ENCODE measurements at regions of chr1 and their contacts with region 1.

Region 1: DNA sequence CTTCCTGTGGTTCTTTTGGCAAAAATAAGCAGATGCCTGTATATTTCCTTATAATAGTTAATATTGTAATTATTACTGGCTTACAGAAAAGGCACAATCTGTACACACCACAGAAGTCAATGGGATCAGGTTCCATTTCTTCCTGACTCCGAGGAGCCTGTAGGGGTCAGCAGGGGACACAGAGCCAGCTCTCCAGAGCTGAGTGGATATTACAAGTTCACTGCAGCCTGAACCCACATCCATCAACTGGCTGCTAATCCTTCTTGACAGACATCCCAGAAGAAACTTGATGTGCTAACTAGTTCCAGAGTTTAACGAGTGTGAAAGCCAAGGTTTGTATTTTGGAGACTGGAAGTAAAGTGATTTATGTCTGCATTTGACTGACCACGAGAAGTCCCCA is 203.8 kb downstream of the LMX1A start:
- DNase-seq: peak; percentile 70
- ATAC-seq: peak; percentile 85
- H3K4me3 ChIP-seq: peak overlapping the region; percentile 28
- H3K27ac ChIP-seq: peak overlapping the region; percentile 94
- H3K4me1 ChIP-seq: peaks cover 21% of the 10 kb centered on the region
- H3K27me3 ChIP-seq: no peaks in the 10 kb centered on the region
- CTCF ChIP-seq: peak; percentile 76

Region 2: DNA sequence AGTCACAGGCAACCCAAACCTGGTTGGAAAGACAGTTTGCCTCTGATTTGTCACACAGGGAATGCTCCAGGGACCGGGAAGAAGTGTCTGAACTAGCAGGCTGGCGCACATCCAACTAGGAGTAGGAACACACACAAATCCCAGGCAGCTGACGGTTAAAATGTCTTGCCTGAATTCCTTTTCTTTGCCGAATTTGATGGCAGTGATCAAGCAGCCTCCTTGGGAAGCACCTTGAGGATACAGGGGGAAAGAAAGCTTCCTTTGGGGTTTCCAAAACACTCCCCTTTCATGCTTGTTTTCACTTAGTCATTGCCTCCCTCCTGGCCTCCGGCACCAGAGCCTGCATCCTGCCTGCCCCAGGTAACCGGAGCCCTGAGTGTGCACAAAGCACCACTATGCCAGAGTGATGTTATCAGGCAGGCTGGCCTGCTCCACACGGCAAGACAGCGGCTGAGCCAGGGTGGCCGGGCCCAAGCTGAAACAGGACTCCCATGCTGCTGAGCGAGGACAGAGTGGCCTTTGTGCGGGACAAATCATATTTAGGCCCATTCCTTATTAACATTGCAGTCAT is 10.0 kb after region 1 on chr1:
- CTCF ChIA-PET with region 1: interaction called, 6 read pairs
- POLR2A ChIA-PET with region 1: no interaction called
- intact Hi-C with region 1: loop called (anchors 1 kb)
- DNase-seq: peak; percentile 98
- ATAC-seq: peak; percentile 97
- H3K4me3 ChIP-seq: peak overlapping the region; percentile 37; the same call in 1 of the 2 replicates
- H3K27ac ChIP-seq: peak overlapping the region; percentile 96
- H3K4me1 ChIP-seq: peaks cover 58% of the 10 kb centered on the region
- H3K27me3 ChIP-seq: no peaks in the 10 kb centered on the region
- CTCF ChIP-seq: no peak

Region 3: GRCh38 chr1:165288350-165289148 is 135.8 kb after region 1 on chr1:
- CTCF ChIA-PET with region 1: no interaction called
- POLR2A ChIA-PET with region 1: no interaction called
- intact Hi-C with region 1: loop called (anchors 2 kb)
- DNase-seq: peak; percentile 79
- ATAC-seq: peak; percentile 81
- H3K4me3 ChIP-seq: no peak overlapping the region
- H3K27ac ChIP-seq: no peak overlapping the region
- H3K4me1 ChIP-seq: peaks cover 16% of the 10 kb centered on the region
- H3K27me3 ChIP-seq: peaks cover 24% of the 10 kb centered on the region
- CTCF ChIP-seq: peak; percentile 23; the same call in 1 of the 2 replicates

Measured in PC-3 (cell line).